SK-N-SH (cell line): ENCODE measurements at regions of chr1 and their contacts with region 1.

Region 1: GRCh38 chr1:42576935-42577334 is 81.3 kb upstream of the PPIH start:
- DNase-seq: no peak
- H3K4me3 ChIP-seq: no peak overlapping the region
- H3K27ac ChIP-seq: no peak overlapping the region
- H3K4me1 ChIP-seq: no peaks in the 10 kb centered on the region
- H3K27me3 ChIP-seq: no peaks in the 10 kb centered on the region
- CTCF ChIP-seq: no peak
- EP300 ChIP-seq: no peak
- RAD21 ChIP-seq: no peak

Region 2: DNA sequence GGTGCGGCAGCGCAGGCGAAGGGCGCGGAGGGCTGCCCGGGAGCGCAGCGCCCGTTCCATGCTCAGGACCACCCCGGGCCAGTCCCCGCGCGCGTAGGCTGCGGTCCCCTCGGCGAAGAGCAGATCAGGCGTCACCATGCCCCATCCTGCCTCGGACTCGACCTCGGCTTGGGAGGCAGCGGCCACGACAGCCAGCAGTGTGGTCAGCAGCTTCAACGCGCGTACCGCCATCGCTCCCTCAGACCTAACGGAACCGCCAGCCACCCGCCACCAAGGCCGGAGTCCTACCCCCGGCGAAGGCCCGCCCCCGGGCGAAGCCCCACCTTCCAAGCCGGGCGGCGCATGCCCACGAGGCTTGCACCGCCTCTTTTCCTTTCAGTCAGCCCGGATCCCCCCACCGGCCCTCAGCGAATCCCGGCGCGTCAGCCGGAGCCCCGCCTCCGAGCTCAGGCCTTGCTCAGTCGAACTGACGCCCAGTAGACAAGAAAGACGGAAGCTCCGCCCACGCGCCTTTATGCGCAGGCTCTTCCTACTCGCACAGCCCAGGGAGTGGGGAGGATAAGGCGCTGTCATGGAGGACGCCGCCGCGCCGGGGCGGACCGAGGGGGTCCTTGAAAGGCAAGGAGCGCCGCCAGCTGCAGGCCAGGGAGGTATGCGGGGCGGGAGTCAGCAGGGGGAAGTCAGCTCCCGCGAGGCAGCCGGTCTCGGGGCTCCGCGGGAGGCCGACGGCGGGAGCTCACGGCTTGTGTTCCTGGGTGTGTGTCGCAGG is 190.0 kb after region 1 on chr1 and contains the starts of genes C1orf50 and P3H1:
- CTCF ChIA-PET with region 1: interaction called, 10 read pairs
- POLR2A ChIA-PET with region 1: no interaction called
- DNase-seq: peak; percentile 97
- H3K4me3 ChIP-seq: peak within 1 kb of the TSS; percentile 77 to 91
- H3K27ac ChIP-seq: peak within 1 kb of the TSS; percentile 75 to 84
- H3K4me1 ChIP-seq: peaks cover 4 to 12% of the 10 kb centered on the region in 2 experiments; a peak in 2 of 4 replicates
- H3K27me3 ChIP-seq: no peaks in the 10 kb centered on the region
- CTCF ChIP-seq: no peak
- EP300 ChIP-seq: no peak
- RAD21 ChIP-seq: no peak
- polyA plus RNA-seq, gene C1orf50: 2.6 and 3.6 TPM in 2 replicates
- polyA plus RNA-seq, gene P3H1: 64.3 and 66.8 TPM in 2 replicates